Caco-2 (cell line): ENCODE measurements at regions of chr14 and their contacts with region 1.

Region 1: GRCh38 chr14:64338616-64339316 is 44.6 kb upstream of the ESR2 start:
- DNase-seq: peak; percentile 97 to 99
- H3K4me3 ChIP-seq: peak overlapping the region; percentile 81
- H3K4me3 Mint-ChIP-seq: peak overlapping the region; percentile 94
- H3K27ac Mint-ChIP-seq: peak overlapping the region; percentile 96
- H3K4me1 ChIP-seq: peaks cover 8% of the 10 kb centered on the region
- H3K4me1 Mint-ChIP-seq: peaks cover 9% of the 10 kb centered on the region
- H3K27me3 ChIP-seq: no peaks in the 10 kb centered on the region
- H3K27me3 Mint-ChIP-seq: no peaks in the 10 kb centered on the region
- CTCF ChIP-seq: no peak

Region 2: DNA sequence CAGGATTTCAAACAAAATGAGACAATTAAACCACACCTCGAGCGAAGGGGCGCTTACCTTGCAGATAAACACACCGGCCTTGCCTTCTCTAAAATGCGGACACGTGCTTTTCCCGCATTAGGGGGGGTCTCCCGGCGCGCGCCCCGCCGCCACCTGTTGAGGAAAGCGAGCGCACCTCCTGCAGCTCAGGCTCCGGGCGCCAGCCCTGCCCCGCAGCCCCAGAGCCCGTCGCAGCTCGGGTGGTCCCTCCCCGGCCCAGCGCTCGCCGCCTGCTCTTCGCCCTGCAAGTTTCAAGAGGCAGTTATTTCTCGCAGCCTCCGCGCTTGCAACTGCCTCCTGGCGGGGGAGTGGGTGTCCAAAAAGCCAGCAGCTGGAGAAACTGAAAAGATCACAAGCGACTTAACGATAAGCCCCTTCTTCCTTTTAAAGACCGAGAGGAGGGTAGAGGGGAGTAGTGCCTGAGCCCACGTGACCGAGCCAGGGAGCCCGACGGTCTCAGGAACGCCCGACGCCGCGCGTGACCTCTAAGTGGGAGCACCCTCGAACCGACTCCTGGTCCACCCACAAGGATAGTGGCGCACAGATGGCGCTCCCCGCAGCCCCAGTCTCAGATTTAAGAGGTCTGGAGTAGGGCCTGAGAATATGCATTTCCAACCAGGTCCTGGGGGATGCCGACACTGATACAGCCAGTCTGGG is 44.6 kb before region 1 on chr14 and contains the start of gene ESR2:
- CTCF ChIA-PET with region 1: no interaction called
- POLR2A ChIA-PET with region 1: no interaction called
- intact Hi-C with region 1: no loop called
- DNase-seq: peak; percentile 45 to 56
- H3K4me3 ChIP-seq: peak within 1 kb of the TSS; percentile 29
- H3K4me3 Mint-ChIP-seq: peak within 1 kb of the TSS; percentile 74
- H3K27ac Mint-ChIP-seq: no peak within 1 kb of the TSS
- H3K4me1 ChIP-seq: peaks cover 7% of the 10 kb centered on the region; the same call in 1 of the 2 replicates
- H3K4me1 Mint-ChIP-seq: no peaks in the 10 kb centered on the region
- H3K27me3 ChIP-seq: no peaks in the 10 kb centered on the region
- H3K27me3 Mint-ChIP-seq: peaks cover 3% of the 10 kb centered on the region
- CTCF ChIP-seq: no peak
- total RNA-seq, gene ESR2: 0.19 and 0.23 TPM in 2 replicates

Region 3: DNA sequence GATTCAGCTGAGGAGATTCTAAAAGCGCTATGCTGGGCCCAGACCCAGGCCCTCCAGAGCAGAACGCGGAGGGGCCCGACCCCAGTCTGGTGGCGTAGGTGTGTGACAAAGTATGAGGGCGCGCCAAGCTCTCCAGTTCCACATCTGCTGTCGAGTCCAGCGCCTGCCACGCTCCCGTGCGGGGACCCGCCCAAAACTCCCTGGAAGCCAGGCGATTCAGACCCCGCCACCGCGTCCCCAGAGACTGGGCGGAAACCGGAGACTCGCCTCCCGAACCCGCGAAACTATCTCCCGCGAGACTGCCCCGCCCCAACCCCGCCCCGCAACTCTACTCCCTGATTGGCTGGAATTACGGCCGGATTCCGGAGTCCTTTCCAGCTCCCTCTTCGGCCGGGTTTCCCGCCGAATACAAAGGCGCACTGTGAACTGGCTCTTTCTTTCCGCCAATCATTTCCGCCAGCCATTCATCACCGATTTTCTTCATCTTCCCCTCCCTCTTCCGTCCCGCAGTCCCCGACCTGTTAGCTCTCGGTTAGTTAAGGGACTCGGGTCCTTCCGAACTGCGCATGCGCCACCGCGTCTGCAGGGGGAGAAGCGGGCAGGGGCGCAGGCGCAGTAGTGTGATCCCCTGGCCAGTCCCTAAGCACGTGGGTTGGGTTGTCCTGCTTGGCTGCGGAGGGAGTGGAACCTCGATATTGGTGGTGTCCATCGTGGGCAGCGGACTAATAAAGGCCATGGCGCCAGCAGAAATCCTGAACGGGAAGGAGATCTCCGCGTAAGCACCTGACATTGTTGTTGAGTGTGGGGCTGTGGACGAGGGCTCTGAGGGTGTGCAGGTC is 49.1 kb after region 1 on chr14 and contains the start of gene MTHFD1:
- CTCF ChIA-PET with region 1: interaction called, 7 read pairs
- POLR2A ChIA-PET with region 1: interaction called, 14 read pairs
- intact Hi-C with region 1: loop called (anchors 1 kb)
- DNase-seq: peak; percentile 98 to 99
- H3K4me3 ChIP-seq: peak within 1 kb of the TSS; percentile 53
- H3K4me3 Mint-ChIP-seq: peak within 1 kb of the TSS; percentile 93
- H3K27ac Mint-ChIP-seq: peak within 1 kb of the TSS; percentile 87
- H3K4me1 ChIP-seq: peaks cover 3% of the 10 kb centered on the region; the same call in 1 of the 2 replicates
- H3K4me1 Mint-ChIP-seq: peaks cover 13% of the 10 kb centered on the region
- H3K27me3 ChIP-seq: no peaks in the 10 kb centered on the region
- H3K27me3 Mint-ChIP-seq: no peaks in the 10 kb centered on the region
- CTCF ChIP-seq: no peak
- total RNA-seq, gene MTHFD1: 180 and 203 TPM in 2 replicates

Region 4: DNA sequence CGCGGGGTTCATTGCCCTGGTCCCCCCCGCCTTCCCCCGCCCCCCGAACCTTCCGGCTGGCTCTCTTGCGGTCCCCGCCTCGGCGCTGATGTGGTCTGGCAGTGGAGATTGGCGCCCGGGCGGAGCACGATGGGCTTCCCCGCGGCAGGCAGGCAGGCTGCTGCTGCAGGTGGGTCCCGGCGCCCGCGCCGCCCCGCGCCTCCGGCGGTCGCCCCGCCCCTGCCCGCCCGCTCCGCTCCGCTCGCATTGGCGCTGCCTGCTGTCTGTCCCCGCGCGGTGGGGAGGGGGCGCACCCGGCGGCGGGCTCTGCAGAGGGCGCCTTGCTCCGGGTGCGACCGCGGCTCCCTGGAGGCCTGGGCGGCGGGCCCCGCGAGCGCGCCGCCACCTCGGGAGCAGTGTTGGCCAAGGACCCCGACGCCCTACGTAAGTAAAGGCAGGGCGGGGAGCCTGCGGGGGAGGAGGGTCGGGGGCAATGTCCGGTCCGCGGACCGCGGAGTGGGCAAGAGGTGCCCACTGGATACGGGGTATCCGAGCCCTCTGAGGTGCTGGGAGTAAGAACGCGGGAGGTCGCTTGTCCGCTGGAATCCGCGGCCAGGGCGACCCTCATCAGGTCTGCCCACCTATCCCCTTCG is 126.5 kb after region 1 on chr14 and contains the start of gene AKAP5:
- CTCF ChIA-PET with region 1: interaction called, 6 read pairs
- POLR2A ChIA-PET with region 1: no interaction called
- intact Hi-C with region 1: loop called (anchors 5 kb)
- DNase-seq: peak; percentile 83 to 94
- H3K4me3 ChIP-seq: peak within 1 kb of the TSS; percentile 97
- H3K4me3 Mint-ChIP-seq: peak within 1 kb of the TSS; percentile 96
- H3K27ac Mint-ChIP-seq: peak within 1 kb of the TSS; percentile 93
- H3K4me1 ChIP-seq: peaks cover 30% of the 10 kb centered on the region
- H3K4me1 Mint-ChIP-seq: peaks cover 10% of the 10 kb centered on the region
- H3K27me3 ChIP-seq: no peaks in the 10 kb centered on the region
- H3K27me3 Mint-ChIP-seq: no peaks in the 10 kb centered on the region
- CTCF ChIP-seq: no peak
- total RNA-seq, gene AKAP5: 15.0 and 15.9 TPM in 2 replicates

Region 5: DNA sequence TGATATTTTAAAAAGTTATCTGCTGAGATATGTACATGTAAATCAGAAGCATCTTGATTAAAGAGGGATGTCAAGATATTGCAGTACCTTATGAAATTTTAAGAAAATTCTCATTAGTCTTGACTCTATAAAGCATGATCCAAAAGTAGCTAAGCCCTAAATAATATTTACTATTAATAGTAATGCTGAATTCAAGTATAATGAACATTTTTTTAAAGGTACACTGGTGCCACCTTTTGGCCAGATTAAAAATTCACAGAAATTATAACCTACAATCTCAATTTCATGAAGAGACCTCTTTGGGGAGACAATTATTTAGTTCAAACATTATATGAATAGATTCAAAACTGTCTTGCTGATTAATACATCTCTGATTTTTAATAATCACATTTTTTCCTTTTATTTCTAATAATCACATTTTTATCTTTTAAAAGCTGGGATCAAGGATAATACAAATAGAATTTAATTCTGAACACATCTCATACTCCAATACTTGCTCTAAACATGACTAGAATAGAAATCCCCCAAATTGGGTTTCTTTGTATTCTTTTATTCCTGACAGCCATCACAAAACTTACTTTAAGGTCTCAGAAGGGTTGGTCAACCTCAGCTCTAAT is 140.0 kb after region 1 on chr14:
- CTCF ChIA-PET with region 1: interaction called, 12 read pairs
- POLR2A ChIA-PET with region 1: no interaction called
- intact Hi-C with region 1: no loop called
- DNase-seq: no peak
- H3K4me3 ChIP-seq: no peak overlapping the region
- H3K4me3 Mint-ChIP-seq: no peak overlapping the region
- H3K27ac Mint-ChIP-seq: no peak overlapping the region
- H3K4me1 ChIP-seq: peaks cover 9% of the 10 kb centered on the region; the same call in 1 of the 2 replicates
- H3K4me1 Mint-ChIP-seq: peaks cover 12% of the 10 kb centered on the region
- H3K27me3 ChIP-seq: no peaks in the 10 kb centered on the region
- H3K27me3 Mint-ChIP-seq: no peaks in the 10 kb centered on the region
- CTCF ChIP-seq: peak in 1 of 2 experiments; percentile 14

Region 6: GRCh38 chr14:64764641-64765520 is 426.1 kb after region 1 on chr14:
- CTCF ChIA-PET with region 1: interaction called, 7 read pairs
- POLR2A ChIA-PET with region 1: no interaction called
- intact Hi-C with region 1: loop called (anchors 5 kb)
- DNase-seq: peak; percentile 76 to 86
- H3K4me3 ChIP-seq: no peak overlapping the region
- H3K4me3 Mint-ChIP-seq: peak overlapping the region; percentile 30
- H3K27ac Mint-ChIP-seq: peak overlapping the region; percentile 19
- H3K4me1 ChIP-seq: peaks cover 37% of the 10 kb centered on the region
- H3K4me1 Mint-ChIP-seq: peaks cover 40% of the 10 kb centered on the region
- H3K27me3 ChIP-seq: no peaks in the 10 kb centered on the region
- H3K27me3 Mint-ChIP-seq: no peaks in the 10 kb centered on the region
- CTCF ChIP-seq: peak; percentile 89 to 93